ENCODE measurements at regions of chr5 and their contacts with region 1.

Region 1: GRCh38 chr5:143435210-143435657 is 31.7 kb upstream of the NR3C1 start:
- DNase-seq: peak; percentile 88 to 94 (median 93)
- H3K4me3 ChIP-seq: peak overlapping the region; percentile 26 to 88 (median 75)
- H3K4me3 Mint-ChIP-seq: peak overlapping the region; percentile 85 to 98
- H3K27ac ChIP-seq: peak overlapping the region; percentile 80 to 96
- H3K27ac Mint-ChIP-seq: peak overlapping the region; percentile 99 to 100 (median 100)
- H3K4me1 ChIP-seq: peaks cover 52 to 68% of the 10 kb centered on the region in 2 donors
- H3K4me1 Mint-ChIP-seq: peaks cover 69% of the 10 kb centered on the region
- H3K27me3 ChIP-seq: no peaks in the 10 kb centered on the region
- H3K27me3 Mint-ChIP-seq: peaks cover 0 to 2% (median 2%) of the 10 kb centered on the region in 3 donors
- CTCF ChIP-seq: no peak

Region 2: DNA sequence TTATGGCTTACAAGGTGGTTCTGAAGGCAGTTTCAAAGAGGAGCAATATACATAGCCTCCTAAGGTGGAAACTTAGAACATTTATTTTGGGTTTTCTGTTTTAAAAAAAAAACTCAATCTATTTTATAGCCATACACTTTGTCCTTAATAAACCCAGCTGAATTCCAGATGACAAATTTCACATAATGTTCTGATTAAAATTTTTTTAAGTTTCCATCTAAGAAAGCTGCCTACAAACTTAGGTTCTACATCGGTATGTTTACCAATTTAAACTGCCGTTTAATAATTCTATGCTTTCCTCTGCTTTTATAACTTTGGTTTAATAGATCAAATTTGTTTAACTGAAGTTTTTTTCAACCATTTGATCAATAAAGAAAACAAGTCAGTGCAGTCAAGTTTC is 44.3 kb before region 1 on chr5:
- intact Hi-C with region 1: no loop called
- DNase-seq: no peak
- H3K4me3 ChIP-seq: no peak overlapping the region
- H3K4me3 Mint-ChIP-seq: no peak overlapping the region
- H3K27ac ChIP-seq: no peak overlapping the region
- H3K27ac Mint-ChIP-seq: no peak overlapping the region
- H3K4me1 ChIP-seq: peaks cover 7 to 28% of the 10 kb centered on the region in 2 donors
- H3K4me1 Mint-ChIP-seq: peaks cover 37% of the 10 kb centered on the region
- H3K27me3 ChIP-seq: no peaks in the 10 kb centered on the region
- H3K27me3 Mint-ChIP-seq: no peaks in the 10 kb centered on the region
- CTCF ChIP-seq: no peak

Region 3: DNA sequence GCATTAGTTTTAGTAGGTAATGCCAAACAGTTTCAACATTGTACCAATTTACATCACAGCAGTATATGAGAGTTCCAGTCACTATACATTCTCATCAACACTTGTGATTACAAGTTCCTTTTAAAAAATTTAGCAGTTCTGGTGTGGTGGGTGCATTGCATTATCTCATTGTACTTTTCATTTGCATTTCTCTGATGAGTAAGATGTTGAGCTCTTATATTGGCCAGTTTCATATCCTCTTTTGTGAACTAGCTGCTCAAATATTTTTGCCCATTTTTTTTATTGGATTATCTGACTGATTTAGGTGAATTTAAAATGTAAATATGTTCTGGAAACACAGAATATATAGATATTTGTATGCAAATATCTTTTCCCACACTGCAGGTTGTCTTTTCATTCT is 129.2 kb after region 1 on chr5:
- intact Hi-C with region 1: loop called in 1 of 2 experiments (anchors 10 kb)
- DNase-seq: peak; percentile 76 to 89 (median 89)
- H3K4me3 ChIP-seq: no peak overlapping the region
- H3K4me3 Mint-ChIP-seq: no peak overlapping the region
- H3K27ac ChIP-seq: peak overlapping the region in 1 of 2 donors; percentile 39
- H3K27ac Mint-ChIP-seq: peak overlapping the region; percentile 26 to 85 (median 54)
- H3K4me1 ChIP-seq: peaks cover 19 to 37% of the 10 kb centered on the region in 2 donors
- H3K4me1 Mint-ChIP-seq: peaks cover 30% of the 10 kb centered on the region
- H3K27me3 ChIP-seq: no peaks in the 10 kb centered on the region
- H3K27me3 Mint-ChIP-seq: peaks cover 0 to 2% (median 0%) of the 10 kb centered on the region in 3 donors
- CTCF ChIP-seq: no peak

Region 4: DNA sequence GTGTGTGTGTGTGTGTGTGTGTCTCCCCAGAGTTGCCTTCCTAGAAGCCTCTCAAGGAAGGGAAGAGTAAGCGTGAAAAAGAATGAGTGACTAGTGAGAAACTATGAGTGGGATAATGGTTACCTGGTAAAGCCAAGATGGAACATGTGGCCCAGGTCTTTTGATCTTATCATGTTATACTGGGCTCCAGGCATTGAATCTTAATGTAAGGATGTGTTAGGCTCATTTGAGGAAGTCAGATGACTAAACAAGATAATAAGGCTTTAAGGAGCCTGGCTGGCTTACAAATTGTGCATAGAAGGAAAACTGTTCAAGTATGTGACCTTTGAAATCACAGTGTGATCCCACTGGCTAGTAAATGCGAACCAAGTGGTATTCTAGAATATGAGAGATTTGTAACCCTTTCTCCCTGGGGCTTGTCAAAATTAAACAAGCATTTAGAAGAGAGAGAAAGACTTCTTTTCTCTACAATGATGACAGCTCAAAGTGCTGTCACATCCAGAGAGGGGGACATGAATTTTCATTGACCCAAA is 346.8 kb after region 1 on chr5:
- intact Hi-C with region 1: no loop called
- DNase-seq: no peak
- H3K4me3 ChIP-seq: no peak overlapping the region
- H3K4me3 Mint-ChIP-seq: no peak overlapping the region
- H3K27ac ChIP-seq: no peak overlapping the region
- H3K27ac Mint-ChIP-seq: no peak overlapping the region
- H3K4me1 ChIP-seq: no peaks in the 10 kb centered on the region
- H3K4me1 Mint-ChIP-seq: no peaks in the 10 kb centered on the region
- H3K27me3 ChIP-seq: no peaks in the 10 kb centered on the region
- H3K27me3 Mint-ChIP-seq: peaks cover 0 to 2% (median 0%) of the 10 kb centered on the region in 3 donors
- CTCF ChIP-seq: no peak

Region 5: GRCh38 chr5:143791848-143792731 is 356.9 kb after region 1 on chr5:
- intact Hi-C with region 1: loop called in 1 of 2 experiments (anchors 10 kb)
- DNase-seq: peak in 1 of 3 donors; percentile 21
- H3K4me3 ChIP-seq: peak overlapping the region; percentile 19 to 79 (median 70)
- H3K4me3 Mint-ChIP-seq: peak overlapping the region; percentile 74 to 84
- H3K27ac ChIP-seq: peak overlapping the region; percentile 27 to 82
- H3K27ac Mint-ChIP-seq: peak overlapping the region; percentile 78 to 91 (median 89)
- H3K4me1 ChIP-seq: peaks cover 26 to 29% of the 10 kb centered on the region in 2 donors
- H3K4me1 Mint-ChIP-seq: peaks cover 34% of the 10 kb centered on the region
- H3K27me3 ChIP-seq: no peaks in the 10 kb centered on the region
- H3K27me3 Mint-ChIP-seq: peaks cover 0 to 4% (median 2%) of the 10 kb centered on the region in 3 donors
- CTCF ChIP-seq: no peak

Region 6: DNA sequence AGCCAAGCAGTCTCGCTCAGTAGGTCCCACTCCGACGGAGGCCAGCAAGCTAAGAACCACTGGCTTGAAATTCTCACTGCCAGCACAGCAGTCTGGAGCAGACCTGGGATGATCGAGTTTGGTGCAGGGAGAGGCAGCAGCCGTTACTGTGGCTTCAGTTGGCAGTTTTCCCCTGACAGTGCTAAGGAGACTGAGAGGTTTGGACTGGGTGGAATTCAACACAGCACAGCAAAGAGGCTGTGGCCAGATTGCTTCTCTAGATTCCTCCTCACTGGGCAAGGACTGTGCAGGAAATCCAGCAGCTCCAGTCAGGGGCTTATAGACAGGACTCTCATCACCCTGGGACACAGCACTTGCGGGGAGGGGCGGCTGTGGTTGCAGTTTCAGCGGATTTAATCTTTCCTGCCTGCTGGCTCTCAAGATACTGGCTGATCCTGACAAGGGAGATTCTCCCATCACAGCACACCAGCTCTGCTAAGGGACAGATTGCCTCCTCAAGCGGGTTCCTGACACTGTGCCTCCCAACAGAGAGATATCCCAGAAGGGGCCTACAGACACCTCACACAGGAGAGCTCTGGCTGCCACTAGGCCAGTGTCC is 613.1 kb after region 1 on chr5:
- intact Hi-C with region 1: no loop called
- DNase-seq: no peak
- H3K4me3 ChIP-seq: no peak overlapping the region
- H3K4me3 Mint-ChIP-seq: no peak overlapping the region
- H3K27ac ChIP-seq: no peak overlapping the region
- H3K27ac Mint-ChIP-seq: peak overlapping the region in 1 of 7 donors; percentile 41
- H3K4me1 ChIP-seq: no peaks in the 10 kb centered on the region
- H3K4me1 Mint-ChIP-seq: no peaks in the 10 kb centered on the region
- H3K27me3 ChIP-seq: no peaks in the 10 kb centered on the region
- H3K27me3 Mint-ChIP-seq: peaks cover 0 to 1% (median 0%) of the 10 kb centered on the region in 3 donors
- CTCF ChIP-seq: no peak

Measured in CD14-positive monocyte (primary cell).